Activated naive CD4-positive, alpha-beta T cell treated with anti-CD3 and anti-CD28 coated beads for 36 hours (primary cell): ENCODE measurements at regions of chr7 and their contacts with region 1.

Region 1: DNA sequence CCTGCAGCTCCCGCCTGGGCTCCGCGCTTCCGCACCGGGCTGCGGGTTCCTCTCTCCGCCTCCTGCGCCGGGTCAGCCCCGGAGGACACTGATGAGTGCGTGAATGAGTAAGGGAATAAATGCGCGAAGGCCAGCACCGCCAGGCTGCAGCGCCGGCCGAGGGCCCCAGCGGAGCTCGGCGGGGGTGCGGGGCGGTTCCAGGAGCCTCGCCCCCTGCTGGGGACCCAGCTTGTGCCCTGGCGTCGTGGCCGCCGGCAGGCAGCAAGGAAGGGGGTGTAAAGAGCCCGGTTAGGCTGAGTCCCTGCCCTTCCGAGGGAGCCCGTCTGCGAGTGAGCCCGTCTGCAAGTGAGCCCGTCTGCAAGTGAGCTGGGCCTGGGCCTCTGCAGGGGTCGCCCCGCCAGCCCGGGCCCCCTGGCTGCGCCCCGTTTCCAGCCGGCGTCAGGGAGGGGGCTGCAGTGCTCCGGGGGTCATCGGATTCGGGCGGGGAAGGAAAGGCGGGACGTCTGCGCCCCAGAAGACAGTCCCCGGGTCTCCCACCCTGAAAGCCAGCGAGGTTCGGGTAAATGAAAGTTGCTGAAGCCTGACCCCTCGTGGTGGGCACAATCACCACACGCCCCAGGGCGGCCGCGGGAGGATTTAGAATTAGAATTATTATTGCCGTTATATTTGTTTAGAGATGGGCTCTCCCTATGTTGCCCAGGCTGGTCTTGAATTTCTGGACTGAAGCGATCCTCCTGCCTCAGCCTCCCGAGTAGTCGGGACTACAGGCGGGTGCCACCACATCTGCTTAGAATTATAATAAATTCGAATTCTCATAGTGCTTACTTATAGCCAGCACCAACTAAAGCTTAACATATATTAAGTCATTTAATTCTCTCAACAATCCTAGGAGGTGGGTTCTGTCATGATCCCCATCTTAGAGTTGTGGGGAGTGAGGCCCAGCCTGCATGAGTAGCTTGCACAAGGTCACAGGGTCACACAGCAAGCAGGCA is 8.6 kb upstream of the CRYGN start:
- DNase-seq: peak; percentile 85
- H3K4me3 Mint-ChIP-seq: peak overlapping the region; percentile 65
- H3K27ac Mint-ChIP-seq: no peak overlapping the region
- H3K4me1 Mint-ChIP-seq: peaks cover 14% of the 10 kb centered on the region
- H3K27me3 Mint-ChIP-seq: no peaks in the 10 kb centered on the region

Region 2: DNA sequence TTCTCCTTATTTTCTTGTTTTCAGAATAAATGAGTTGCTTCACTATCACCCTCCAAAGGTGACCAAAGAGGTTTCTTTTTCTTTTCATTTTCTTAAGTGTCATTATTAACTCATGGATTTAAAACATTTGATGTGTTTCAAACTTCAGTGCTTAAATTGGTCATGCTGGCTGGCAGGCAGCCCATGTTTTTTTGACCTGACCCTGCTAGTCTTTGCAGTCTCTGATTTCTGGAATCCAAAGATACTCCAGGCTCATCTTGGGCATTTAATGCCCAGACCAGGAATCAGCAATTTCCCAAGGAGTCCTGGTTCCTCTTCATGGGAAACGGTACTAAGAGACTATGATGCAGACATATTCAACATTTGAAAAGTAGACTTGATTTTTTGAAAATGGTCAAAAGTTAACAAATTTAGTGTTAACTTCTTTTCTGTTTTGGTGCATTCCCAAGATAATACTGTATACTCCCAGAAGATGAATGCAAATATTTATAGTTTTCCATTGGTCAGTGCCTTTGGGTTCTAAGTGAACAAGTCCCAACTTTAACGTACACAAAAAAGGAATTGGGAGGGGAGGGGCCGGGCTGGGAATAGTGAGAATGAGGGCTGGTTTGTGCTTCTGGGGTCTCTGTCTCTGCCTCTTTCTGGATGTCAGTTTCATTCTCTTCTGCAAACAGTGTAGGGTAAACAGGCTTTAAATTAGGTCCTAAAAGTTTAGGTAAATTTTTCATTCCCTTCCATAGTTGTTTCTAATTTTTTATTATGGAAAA is 87.2 kb before region 1 on chr7:
- CTCF ChIA-PET with region 1: interaction called, 198 read pairs
- intact Hi-C with region 1: no loop called
- DNase-seq: no peak
- H3K4me3 Mint-ChIP-seq: no peak overlapping the region
- H3K27ac Mint-ChIP-seq: no peak overlapping the region
- H3K4me1 Mint-ChIP-seq: peaks cover 2% of the 10 kb centered on the region
- H3K27me3 Mint-ChIP-seq: no peaks in the 10 kb centered on the region

Region 3: DNA sequence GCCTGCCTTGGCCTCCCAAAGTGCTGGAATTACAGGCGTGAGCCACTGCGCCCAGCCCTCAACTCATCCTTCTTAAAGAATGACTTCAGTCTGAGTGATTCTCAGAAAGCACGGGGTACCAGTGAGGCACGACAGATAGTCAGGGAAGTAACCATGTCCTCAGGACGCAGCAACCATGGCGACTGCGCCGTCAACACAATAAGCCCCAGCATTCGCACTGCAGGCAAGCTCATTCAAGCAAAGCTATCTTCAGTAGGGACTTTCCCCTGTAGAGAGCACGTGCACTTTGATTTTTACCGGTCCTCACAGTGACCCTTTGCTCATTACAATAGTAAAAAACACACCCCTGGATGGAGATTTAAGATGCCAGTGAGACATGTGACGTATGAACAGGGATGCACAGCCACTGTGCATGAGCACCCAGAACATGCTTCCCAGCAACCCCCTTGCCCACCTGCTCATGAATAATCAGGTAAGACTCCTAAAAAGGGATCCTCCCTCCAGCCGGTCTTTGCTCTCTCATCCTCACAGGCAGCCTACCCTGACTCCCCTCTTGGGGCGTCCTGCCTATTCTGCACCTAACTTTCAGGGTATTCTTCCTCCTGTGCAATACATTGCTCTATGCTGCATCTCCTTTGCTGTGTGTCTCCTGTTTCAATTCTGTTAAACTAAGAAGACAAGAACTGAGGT is 47.8 kb before region 1 on chr7:
- CTCF ChIA-PET with region 1: interaction called, 12 read pairs
- intact Hi-C with region 1: no loop called
- DNase-seq: no peak
- H3K4me3 Mint-ChIP-seq: no peak overlapping the region
- H3K27ac Mint-ChIP-seq: no peak overlapping the region
- H3K4me1 Mint-ChIP-seq: no peaks in the 10 kb centered on the region
- H3K27me3 Mint-ChIP-seq: no peaks in the 10 kb centered on the region

Region 4: GRCh38 chr7:151432791-151433521 is 15.6 kb before region 1 on chr7:
- CTCF ChIA-PET with region 1: interaction called, 27 read pairs
- intact Hi-C with region 1: loop called (anchors 1 kb)
- DNase-seq: peak; percentile 91
- H3K4me3 Mint-ChIP-seq: peak overlapping the region; percentile 46
- H3K27ac Mint-ChIP-seq: peak overlapping the region; percentile 87
- H3K4me1 Mint-ChIP-seq: peaks cover 47% of the 10 kb centered on the region
- H3K27me3 Mint-ChIP-seq: no peaks in the 10 kb centered on the region

Region 5: DNA sequence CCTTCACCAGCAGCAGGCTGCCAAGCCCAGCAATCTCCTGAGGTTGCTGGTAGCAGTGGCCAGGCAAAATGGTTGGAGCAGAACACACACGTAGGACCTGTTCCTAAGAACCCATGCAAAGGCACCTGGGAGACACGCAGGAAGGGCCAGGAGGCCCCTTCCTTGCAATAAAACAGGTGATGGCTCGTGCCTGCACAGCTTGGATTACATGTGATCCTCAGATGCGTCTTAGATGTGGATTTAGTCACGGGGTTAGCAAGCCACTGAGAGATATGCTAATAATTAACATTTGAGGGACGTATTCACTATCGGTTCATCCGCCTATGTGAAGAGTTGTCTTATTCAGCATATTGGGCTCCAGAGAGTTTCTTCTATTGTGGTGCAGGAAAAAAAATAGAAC is 75.7 kb after region 1 on chr7:
- CTCF ChIA-PET with region 1: no interaction called
- intact Hi-C with region 1: no loop called
- DNase-seq: no peak
- H3K4me3 Mint-ChIP-seq: no peak overlapping the region
- H3K27ac Mint-ChIP-seq: no peak overlapping the region
- H3K4me1 Mint-ChIP-seq: peaks cover 6% of the 10 kb centered on the region
- H3K27me3 Mint-ChIP-seq: no peaks in the 10 kb centered on the region

Region 6: DNA sequence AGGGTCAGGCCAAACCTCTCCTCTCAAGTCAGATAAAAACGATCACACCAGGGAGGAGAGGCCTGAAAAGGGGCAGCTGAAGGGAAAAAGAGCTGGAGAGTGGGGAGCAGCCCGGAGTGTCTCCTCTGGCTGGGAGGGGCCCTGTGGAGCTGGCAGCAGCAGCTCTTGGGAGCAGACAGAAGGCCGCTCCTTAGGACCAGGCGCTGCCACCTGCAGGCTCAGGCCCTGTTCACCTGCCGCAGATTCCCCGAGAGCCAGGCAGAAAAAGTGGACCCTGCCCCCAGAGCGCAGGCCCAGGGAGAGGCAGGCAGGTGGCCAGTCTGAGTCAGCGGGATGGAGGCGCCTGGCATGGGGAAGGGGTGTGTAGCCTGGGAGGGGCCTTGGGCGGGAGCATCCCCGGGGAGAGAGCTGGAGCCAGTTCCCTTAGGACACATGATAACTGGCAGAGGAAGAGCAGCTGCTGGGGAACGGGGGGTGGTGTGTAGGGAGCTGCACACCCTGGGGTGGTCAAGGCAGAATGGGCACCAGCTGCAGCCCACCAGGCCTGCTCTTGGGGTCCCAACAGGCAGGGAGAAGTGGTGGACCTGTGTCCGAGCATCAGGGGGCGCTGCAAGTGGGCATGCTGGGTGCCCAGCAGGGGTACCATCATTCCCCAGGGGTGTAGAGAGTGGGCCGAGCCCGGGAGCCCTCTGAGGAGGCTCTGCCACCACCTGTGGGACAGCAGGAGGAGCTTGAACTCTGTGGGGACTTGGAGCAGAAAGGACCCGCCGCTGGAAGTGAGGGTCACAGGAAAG is 248.4 kb after region 1 on chr7:
- CTCF ChIA-PET with region 1: no interaction called
- intact Hi-C with region 1: no loop called
- DNase-seq: no peak
- H3K4me3 Mint-ChIP-seq: no peak overlapping the region
- H3K27ac Mint-ChIP-seq: no peak overlapping the region
- H3K4me1 Mint-ChIP-seq: peaks cover 4% of the 10 kb centered on the region
- H3K27me3 Mint-ChIP-seq: no peaks in the 10 kb centered on the region

Region 7: GRCh38 chr7:151759591-151760042 is 311.1 kb after region 1 on chr7:
- CTCF ChIA-PET with region 1: interaction called, 8 read pairs
- intact Hi-C with region 1: loop called (anchors 5 kb)
- DNase-seq: peak; percentile 75
- H3K4me3 Mint-ChIP-seq: no peak overlapping the region
- H3K27ac Mint-ChIP-seq: no peak overlapping the region
- H3K4me1 Mint-ChIP-seq: peaks cover 22% of the 10 kb centered on the region
- H3K27me3 Mint-ChIP-seq: no peaks in the 10 kb centered on the region